Thyroid gland (tissue), 4 donors: ENCODE measurements at regions of chr4 and their contacts with region 1.

Region 1: DNA sequence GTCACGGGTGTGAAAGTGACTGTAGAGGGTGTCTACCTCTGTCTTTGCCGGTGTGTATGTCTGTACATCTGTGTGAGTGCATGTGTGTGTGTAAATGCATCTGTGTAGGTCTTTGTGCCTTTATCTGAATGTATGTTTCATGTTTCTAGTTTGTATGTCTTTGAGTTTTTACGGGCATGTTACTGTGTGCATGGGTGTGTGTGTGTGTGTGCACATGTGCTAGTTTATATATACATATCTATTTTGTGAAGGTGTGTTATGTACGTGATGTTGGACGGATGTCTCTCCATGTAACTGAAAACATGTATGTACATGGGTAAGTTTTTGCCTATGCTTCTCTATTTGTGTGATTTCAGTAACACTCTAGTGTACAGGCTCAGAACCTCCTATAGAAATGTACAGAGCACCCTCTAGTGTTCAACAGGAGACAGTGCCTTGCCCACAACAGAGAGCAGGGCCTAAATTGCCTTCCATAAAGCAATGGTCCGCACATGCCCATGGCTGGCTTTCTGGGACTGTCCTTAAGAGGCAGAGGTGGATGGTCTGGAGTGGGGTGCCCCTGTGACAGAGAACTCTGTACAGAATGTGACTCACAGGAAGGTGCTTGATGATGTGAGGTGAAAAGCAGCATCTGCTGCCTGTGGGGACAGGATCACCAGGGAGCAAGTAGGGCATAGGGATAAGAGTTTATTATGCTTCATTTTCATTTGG is 343.5 kb downstream of the RAPGEF2 start:
- DNase-seq: peak; percentile 11 to 14
- H3K4me3 ChIP-seq: no peak overlapping the region
- H3K27ac ChIP-seq: no peak overlapping the region
- H3K4me1 ChIP-seq: no peaks in the 10 kb centered on the region
- H3K27me3 ChIP-seq: no peaks in the 10 kb centered on the region
- CTCF ChIP-seq: peak; percentile 54 to 79 (median 74)
- POLR2A ChIP-seq: no peak

Region 2: DNA sequence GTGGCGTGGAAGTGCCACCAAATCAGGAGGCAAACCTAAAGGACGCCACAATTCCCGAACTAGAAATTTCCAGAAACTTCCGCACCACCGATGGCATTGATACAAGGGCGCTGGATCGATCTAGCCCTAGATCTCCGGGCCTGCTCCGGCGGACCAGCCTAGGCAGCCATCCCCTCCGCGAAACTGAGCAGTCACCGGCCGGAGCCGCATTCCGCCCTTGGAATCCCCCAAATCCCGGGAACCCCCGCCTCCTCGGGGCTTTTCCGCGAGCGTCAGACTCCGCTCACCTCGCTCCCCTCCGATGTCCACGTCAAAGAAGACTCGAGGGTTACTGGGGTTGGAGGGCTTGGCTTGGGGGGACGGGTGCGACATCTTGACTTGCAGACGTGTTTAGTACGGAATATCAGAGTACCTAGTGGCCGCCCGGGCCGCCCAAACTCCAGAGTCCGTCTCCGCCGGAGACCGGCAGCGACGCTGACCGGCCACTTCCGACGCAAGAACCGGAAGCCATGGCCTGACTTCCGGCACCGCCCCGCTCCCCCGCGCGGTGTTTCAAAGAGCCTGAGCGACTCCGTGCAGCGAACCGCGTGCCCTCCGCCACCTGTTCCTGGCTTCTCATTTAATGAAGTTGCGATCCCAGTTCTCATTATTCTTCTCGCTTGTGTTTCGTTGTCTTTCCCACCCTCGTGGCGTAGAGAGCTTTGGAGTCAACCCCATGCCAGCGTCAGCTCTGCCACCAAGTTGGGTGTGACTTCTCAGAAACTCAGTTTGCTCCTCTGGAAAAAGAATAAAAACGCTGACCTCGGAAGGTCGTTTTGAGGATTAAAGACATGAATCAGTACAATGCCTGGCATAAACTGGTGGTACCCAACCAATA is 723.3 kb before region 1 on chr4 and contains the start of gene PPID:
- intact Hi-C with region 1: loop called (anchors 10 kb)
- DNase-seq: peak; percentile 74 to 82
- H3K4me3 ChIP-seq: peak within 1 kb of the TSS; percentile 64 to 92 (median 70)
- H3K27ac ChIP-seq: peak within 1 kb of the TSS; percentile 56 to 96 (median 95)
- H3K4me1 ChIP-seq: peaks cover 0 to 7% of the 10 kb centered on the region in 2 donors
- H3K27me3 ChIP-seq: no peaks in the 10 kb centered on the region
- CTCF ChIP-seq: no peak
- POLR2A ChIP-seq: peak in 1 of 2 donors; percentile 80
- total RNA-seq, gene PPID: 6.8 to 24.4 (median 19.9) TPM

Region 3: DNA sequence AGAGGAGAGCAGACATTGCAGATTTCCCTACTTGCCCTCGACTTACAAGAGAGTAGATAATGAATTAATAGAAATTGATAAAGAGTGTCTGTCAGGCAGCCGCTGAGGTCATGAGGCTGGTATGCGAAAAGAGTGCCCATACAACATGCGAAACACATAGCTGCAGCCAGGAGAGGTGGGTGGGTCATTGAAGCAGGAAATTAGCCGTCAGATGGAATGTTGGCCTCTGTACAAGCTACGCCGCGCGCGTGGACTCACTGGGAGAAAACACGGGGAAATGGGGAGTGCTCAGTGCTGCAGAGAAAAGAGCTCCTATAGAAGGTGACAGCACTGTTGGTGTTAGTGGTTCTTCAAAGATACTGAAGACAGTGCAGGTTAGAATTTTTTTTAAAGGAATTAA is 218.4 kb before region 1 on chr4:
- intact Hi-C with region 1: no loop called
- DNase-seq: peak; percentile 91 to 94
- H3K4me3 ChIP-seq: peak overlapping the region in 1 of 3 donors; percentile 0
- H3K27ac ChIP-seq: peak overlapping the region; percentile 65 to 86 (median 86)
- H3K4me1 ChIP-seq: peaks cover 23 to 27% of the 10 kb centered on the region in 2 donors
- H3K27me3 ChIP-seq: no peaks in the 10 kb centered on the region
- CTCF ChIP-seq: peak in 4 of 6 experiments; percentile 18 to 47 (median 28)
- POLR2A ChIP-seq: peak in 1 of 2 donors; percentile 52